Colonic mucosa (tissue), 4 donors: ENCODE measurements at regions of chr1 and their contacts with region 1.

Region 1: GRCh38 chr1:22131875-22132486 is 10.9 kb downstream of the WNT4 start:
- DNase-seq: peak; percentile 61
- H3K4me3 ChIP-seq: no peak overlapping the region
- H3K27ac ChIP-seq: no peak overlapping the region
- H3K4me1 ChIP-seq: no peaks in the 10 kb centered on the region
- H3K27me3 ChIP-seq: no peaks in the 10 kb centered on the region
- CTCF ChIP-seq: peak; percentile 84

Region 2: GRCh38 chr1:22052115-22053016 is 79.6 kb before region 1 on chr1 and contains the start of gene CDC42:
- intact Hi-C with region 1: no loop called
- DNase-seq: peak; percentile 97
- H3K4me3 ChIP-seq: peak within 1 kb of the TSS; percentile 81
- H3K27ac ChIP-seq: peak within 1 kb of the TSS; percentile 97
- H3K4me1 ChIP-seq: peaks cover 10% of the 10 kb centered on the region
- H3K27me3 ChIP-seq: no peaks in the 10 kb centered on the region
- CTCF ChIP-seq: no peak
- total RNA-seq, gene CDC42: 264 to 345 TPM

Region 3: DNA sequence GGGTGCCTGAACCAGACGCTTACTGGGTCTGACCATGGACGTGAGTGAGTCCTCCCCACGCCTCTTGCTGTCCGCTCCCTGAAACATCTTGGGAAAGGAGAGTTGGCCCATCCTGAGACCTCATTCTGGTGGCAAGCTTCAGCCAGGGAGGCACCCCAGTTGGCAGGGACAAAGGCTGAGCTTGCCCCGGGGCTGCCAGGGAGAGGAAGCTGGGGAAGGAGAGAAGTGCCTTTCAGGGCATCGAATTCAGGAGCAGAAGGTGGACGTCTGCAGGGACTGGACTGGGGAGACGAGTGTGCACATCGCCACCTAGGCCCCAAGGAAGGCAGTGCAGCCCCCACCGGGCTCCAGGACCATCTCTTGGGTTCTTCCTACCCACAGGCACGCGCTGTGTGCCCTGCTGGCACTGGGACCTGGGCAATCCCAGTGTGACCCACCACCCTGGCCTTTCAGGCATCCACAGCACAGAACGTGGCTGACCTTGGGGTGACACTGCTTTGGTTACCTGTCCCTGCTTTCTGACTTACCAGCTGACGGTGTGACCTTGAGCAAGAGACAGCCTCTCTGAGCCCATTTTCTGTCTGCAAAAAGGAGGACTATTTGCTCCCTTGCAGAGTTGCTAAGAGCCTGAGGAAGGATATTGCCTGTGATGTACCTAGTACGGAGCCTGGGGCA is 143.9 kb after region 1 on chr1:
- intact Hi-C with region 1: loop called (anchors 5 kb)
- DNase-seq: peak; percentile 68
- H3K4me3 ChIP-seq: no peak overlapping the region
- H3K27ac ChIP-seq: no peak overlapping the region
- H3K4me1 ChIP-seq: no peaks in the 10 kb centered on the region
- H3K27me3 ChIP-seq: no peaks in the 10 kb centered on the region
- CTCF ChIP-seq: peak; percentile 83

Region 4: GRCh38 chr1:22641906-22642636 is 510.1 kb after region 1 on chr1:
- intact Hi-C with region 1: loop called (anchors 10 kb)
- DNase-seq: peak; percentile 83
- H3K4me3 ChIP-seq: no peak overlapping the region
- H3K27ac ChIP-seq: no peak overlapping the region
- H3K4me1 ChIP-seq: no peaks in the 10 kb centered on the region
- H3K27me3 ChIP-seq: no peaks in the 10 kb centered on the region
- CTCF ChIP-seq: peak; percentile 90